ENCODE measurements at regions of chr17 and their contacts with region 1.

Region 1: DNA sequence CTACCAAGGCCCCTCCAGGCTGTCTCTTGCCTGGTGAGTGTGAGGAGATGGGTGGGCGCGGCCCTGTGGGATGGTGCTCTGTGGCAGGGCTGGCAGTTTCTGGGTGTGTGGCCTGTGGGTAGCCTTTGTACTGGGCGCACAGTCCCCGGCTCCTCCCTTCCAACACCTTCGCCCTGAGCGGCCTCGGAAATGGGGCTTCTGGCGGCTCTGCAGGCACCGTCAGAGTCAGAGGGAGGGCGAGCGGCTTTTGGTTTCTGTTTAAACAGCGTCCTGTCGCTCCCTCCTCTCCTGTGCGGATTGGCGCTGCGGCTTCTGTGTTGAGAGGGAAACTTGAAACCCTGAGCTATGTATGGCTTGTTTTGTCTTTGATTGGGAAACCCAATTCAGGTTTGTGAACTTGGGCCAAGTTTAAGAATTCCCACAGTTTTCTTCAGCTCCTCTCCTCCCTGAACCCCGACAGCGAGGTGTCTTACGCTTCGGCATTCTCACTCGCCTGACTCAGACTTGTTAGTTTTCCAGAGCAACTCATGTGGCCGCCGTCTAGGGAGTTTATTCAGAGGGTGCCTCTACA is 8.3 kb upstream of the ZNF750 start:
- DNase-seq: no peak
- ATAC-seq: no peak

Region 2: DNA sequence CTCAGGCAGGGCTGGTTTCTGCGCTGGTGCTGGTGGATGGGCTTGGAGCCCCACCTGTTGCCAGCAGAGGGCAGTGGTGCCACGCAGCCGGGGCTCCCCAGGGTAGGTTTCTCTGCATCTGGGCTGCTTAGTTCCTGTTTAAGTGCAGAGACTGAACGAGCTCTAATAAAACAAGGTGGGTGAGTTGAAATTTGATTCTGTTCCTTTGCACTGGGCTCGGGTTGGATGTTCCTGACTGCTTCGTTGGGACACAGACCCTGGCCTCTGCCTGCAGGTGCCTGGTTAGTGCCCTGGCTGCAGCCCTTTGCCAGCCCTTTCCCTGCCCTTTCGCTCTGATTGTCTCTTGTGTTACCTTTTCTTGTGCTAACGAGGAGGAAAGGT is 66.2 kb before region 1 on chr17:
- intact Hi-C with region 1: loop called (anchors 2 kb)
- DNase-seq: peak; percentile 91
- ATAC-seq: peak; percentile 95

Region 3: GRCh38 chr17:82807101-82807500 is 41.0 kb before region 1 on chr17:
- intact Hi-C with region 1: loop called (anchors 1 kb)
- DNase-seq: peak; percentile 20
- ATAC-seq: no peak

Region 4: GRCh38 chr17:82871056-82871903 is 23.2 kb after region 1 on chr17:
- intact Hi-C with region 1: loop called (anchors 1 kb)
- DNase-seq: peak; percentile 68
- ATAC-seq: no peak

Region 5: DNA sequence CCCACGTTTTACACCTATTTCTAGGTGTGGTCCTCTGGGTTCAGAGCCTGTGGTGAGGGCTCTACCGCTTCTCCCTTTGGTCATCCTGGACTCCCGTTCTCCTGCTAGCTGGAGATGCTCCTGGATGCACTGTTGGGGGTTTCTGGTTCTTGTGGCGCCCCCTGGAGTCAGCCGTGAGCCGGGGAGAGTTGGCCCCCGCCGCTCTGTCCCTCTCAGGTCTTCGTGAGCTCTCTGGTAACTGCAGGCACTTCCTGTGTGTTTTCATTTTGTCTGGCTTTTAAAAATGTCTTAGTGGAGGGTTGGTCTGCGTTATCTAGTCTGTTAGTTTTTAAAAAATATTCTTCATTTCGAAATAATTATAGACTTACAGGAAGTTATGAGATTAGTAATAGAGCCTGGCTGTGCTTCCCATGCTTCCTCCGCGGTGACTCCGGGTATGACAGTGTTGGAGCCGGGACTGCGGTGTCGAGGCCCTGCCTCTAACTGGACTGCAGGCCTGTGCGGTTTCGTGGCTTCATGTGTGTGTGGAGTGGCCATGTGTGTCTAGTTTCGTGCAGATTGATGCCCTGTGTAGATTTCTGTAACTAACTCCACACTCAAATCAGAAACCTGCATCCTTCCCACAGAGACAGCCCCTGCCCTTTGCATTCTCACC is 69.7 kb after region 1 on chr17:
- intact Hi-C with region 1: loop called (anchors 10 kb)
- DNase-seq: no peak
- ATAC-seq: no peak

Region 6: GRCh38 chr17:82929011-82929622 is 81.0 kb after region 1 on chr17:
- intact Hi-C with region 1: no loop called
- DNase-seq: no peak
- ATAC-seq: no peak